Thyroid gland (tissue), 4 donors: ENCODE measurements at regions of chr21 and their contacts with region 1.

Region 1: GRCh38 chr21:36147911-36148310 is 8.7 kb upstream of the DOP1B start:
- DNase-seq: no peak
- H3K4me3 ChIP-seq: no peak overlapping the region
- H3K27ac ChIP-seq: no peak overlapping the region
- H3K4me1 ChIP-seq: peaks cover 7 to 12% of the 10 kb centered on the region in 2 donors
- H3K27me3 ChIP-seq: no peaks in the 10 kb centered on the region
- CTCF ChIP-seq: no peak
- POLR2A ChIP-seq: no peak

Region 2: DNA sequence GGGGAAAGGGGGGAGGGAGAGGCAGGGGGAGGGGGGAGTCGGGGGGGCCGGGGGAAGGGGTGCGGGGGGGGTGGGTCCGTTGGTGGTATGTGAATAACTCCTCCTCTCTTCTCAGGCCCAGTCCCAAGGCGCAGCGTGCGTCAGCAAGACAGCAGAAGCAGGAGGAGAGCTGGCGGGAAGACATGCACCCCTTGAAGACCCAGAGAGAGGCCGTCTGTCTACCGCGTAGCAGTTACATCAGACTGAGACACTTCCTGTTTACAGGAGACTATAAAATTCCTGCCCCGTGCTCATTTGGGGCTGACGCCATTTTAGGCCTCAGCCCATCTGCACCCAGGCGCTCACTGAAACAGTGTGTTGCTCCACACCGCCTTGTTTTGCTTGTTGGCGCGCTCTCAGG is 142.9 kb before region 1 on chr21:
- intact Hi-C with region 1: no loop called
- DNase-seq: no peak
- H3K4me3 ChIP-seq: no peak overlapping the region
- H3K27ac ChIP-seq: no peak overlapping the region
- H3K4me1 ChIP-seq: no peaks in the 10 kb centered on the region
- H3K27me3 ChIP-seq: no peaks in the 10 kb centered on the region
- CTCF ChIP-seq: no peak
- POLR2A ChIP-seq: no peak

Region 3: GRCh38 chr21:36207577-36208320 is 59.8 kb after region 1 on chr21:
- intact Hi-C with region 1: loop called (anchors 2 kb)
- DNase-seq: no peak
- H3K4me3 ChIP-seq: no peak overlapping the region
- H3K27ac ChIP-seq: no peak overlapping the region
- H3K4me1 ChIP-seq: peaks cover 22 to 25% of the 10 kb centered on the region in 2 donors
- H3K27me3 ChIP-seq: no peaks in the 10 kb centered on the region
- CTCF ChIP-seq: no peak
- POLR2A ChIP-seq: no peak

Region 4: DNA sequence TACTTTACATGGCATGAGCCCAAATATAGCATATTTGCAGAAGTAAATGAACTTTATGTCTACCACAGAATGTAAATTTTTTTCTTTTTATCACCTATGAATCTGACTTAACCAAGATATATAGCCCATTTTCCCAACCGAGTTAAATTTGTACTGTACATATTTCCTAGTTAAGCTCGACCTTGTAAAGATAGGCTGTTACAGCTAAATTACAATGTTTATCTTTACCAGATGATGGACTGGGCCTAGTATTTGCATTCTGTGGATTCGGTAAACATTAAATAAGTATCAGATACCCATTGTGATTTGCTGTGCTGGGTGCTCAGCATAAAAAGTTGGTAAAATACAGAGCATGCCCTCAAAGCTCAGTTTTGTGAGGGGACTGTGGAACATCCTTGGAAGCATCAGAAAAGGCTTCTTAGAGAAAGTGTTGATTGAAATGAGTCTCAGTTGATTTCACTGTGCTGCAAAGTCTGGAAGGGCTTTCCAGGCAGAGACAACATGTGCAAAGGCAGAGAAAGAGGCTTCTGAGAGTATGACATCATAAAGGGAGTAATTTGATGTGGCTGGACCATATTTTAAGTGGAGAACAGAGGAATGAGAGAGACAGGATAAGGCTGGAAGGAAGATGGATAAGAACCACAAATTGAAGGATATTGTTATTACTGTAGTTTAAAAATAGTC is 199.5 kb after region 1 on chr21:
- intact Hi-C with region 1: no loop called
- DNase-seq: no peak
- H3K4me3 ChIP-seq: no peak overlapping the region
- H3K27ac ChIP-seq: no peak overlapping the region
- H3K4me1 ChIP-seq: no peaks in the 10 kb centered on the region
- H3K27me3 ChIP-seq: no peaks in the 10 kb centered on the region
- CTCF ChIP-seq: no peak
- POLR2A ChIP-seq: no peak